K562 (cell line): ENCODE measurements at regions of chr7 and their contacts with region 1.

Region 1: DNA sequence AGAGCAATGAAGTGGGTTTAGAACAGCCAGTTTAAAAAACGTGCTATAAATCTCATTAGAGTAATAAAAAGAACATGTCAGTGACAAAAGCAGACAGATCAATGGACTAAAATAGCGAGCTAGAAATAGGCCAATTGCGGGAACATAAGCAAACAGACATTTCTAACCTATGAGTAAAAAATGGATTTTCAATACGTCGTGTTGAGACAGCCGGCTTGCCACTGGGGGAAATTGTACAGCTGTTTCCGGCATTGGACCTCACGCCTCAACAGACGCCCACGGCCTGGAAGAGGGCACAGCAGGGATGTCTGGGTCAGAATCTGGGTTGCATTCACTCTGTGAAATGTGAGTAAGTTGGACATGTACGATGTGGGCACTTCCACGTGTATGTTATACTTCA is 92.9 kb downstream of the SVOPL start:
- DNase-seq: no peak
- ATAC-seq: no peak
- H3K4me3 ChIP-seq: no peak overlapping the region
- H3K27ac ChIP-seq: no peak overlapping the region
- H3K4me1 ChIP-seq: peaks cover 0 to 6% of the 10 kb centered on the region in 2 experiments; a peak in 1 of 5 replicates
- H3K27me3 ChIP-seq: no peaks in the 10 kb centered on the region
- CTCF ChIP-seq: no peak
- EP300 ChIP-seq: no peak
- POLR2A ChIP-seq: no peak
- RAD21 ChIP-seq: no peak

Region 2: DNA sequence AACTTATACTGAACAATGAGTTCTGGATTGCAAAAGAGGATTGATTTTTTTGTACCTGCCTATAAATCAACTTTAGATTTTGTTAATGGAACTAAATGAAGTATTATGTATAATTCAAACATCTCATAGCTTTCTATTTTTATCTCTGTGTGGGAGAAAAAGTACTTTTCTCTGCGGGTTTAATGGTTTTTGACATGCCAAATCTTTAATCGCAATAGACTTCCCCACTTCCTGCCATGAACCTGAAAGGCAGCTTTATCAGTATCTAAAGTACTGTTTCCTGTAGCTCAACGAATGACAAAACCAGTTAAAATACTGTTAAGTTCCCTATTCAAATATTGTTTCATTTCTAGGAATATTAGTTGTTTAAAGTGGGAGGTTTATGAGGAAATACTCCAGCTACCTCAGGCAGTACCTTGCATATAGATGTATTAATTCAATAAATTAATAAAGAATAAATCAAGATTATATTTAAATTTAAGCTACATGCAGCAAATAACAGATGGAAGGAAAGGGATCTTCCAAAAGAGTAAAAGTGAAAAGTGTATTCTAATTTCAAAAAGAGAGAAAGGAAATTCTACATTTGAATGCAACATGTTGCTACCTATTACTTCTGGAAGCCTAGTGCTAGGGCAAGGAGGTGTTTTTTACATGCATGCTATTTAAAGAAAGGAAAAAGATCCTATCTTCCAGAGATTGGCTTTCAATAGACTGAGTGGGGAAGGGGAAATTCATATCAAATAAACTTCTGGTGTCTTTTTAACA is 17.0 kb after region 1 on chr7:
- CTCF ChIA-PET with region 1: no interaction called
- POLR2A ChIA-PET with region 1: interaction called, 10 read pairs
- in situ Hi-C with region 1: no loop called
- intact Hi-C with region 1: no loop called
- DNase-seq: no peak
- ATAC-seq: no peak
- H3K4me3 ChIP-seq: no peak overlapping the region
- H3K27ac ChIP-seq: no peak overlapping the region
- H3K4me1 ChIP-seq: peaks cover 0 to 8% of the 10 kb centered on the region in 2 experiments; a peak in 3 of 5 replicates
- H3K27me3 ChIP-seq: peaks cover 11 to 26% of the 10 kb centered on the region in 2 experiments; a peak in 4 of 5 replicates
- CTCF ChIP-seq: no peak
- EP300 ChIP-seq: peak; percentile 26; the same call in 1 of the 2 replicates
- POLR2A ChIP-seq: no peak
- RAD21 ChIP-seq: no peak